ENCODE measurements at regions of chr1 and their contacts with region 1.

Region 1: DNA sequence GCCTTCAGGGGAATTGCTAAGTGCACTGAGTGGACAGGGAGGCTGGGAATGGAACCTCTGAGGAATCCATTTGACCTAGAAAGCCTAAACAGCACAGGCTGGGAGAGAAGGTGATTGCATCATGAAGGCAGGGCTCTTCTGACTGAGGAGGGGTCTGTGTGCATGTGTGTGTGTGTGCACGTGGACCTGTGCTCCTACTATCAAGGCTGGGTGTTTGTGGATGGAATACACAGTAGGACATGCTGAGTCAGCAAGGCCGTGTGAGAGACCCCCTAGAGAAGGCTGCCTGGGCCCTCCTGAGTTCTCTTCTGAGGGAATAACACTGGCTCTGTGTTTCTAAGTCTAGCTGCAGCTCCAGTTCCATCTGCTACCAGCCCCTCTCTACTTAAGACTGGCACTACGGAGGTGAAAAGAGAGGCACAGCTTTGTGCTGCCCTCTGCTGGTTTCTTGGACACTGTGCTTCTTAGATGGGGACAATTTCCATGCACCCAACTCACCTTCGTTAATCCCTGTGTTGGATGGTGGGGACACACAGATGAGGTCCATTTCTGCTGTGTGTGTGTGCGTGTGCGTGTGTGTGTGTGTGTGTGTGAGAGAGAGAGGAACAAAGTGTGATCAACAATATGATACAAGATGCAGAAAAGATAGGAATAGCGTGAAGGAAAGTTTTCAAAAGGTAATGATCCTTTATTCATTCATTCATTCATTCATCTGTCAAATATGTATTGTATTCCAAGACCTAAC is 6.2 kb upstream of the EFCAB14 start:
- DNase-seq: peak; percentile 34 to 65
- ATAC-seq: peak; percentile 90 to 98
- H3K4me3 ChIP-seq: no peak overlapping the region
- H3K27ac ChIP-seq: no peak overlapping the region
- H3K4me1 ChIP-seq: peaks cover 4 to 11% of the 10 kb centered on the region in 2 donors
- H3K27me3 ChIP-seq: no peaks in the 10 kb centered on the region
- CTCF ChIP-seq: peak; percentile 74 to 83 (median 76)
- POLR2A ChIP-seq: no peak

Region 2: GRCh38 chr1:46401964-46402626 is 323.1 kb before region 1 on chr1:
- in situ Hi-C with region 1: loop called in 1 of 4 experiments (anchors 25 kb)
- intact Hi-C with region 1: no loop called
- DNase-seq: peak; percentile 49 to 80
- ATAC-seq: peak; percentile 58 to 80
- H3K4me3 ChIP-seq: peak overlapping the region in 3 of 4 donors; percentile 17 to 34 (median 21)
- H3K27ac ChIP-seq: peak overlapping the region; percentile 47 to 80 (median 70)
- H3K4me1 ChIP-seq: peaks cover 34 to 49% of the 10 kb centered on the region in 2 donors
- H3K27me3 ChIP-seq: no peaks in the 10 kb centered on the region
- CTCF ChIP-seq: no peak
- POLR2A ChIP-seq: no peak

Region 3: DNA sequence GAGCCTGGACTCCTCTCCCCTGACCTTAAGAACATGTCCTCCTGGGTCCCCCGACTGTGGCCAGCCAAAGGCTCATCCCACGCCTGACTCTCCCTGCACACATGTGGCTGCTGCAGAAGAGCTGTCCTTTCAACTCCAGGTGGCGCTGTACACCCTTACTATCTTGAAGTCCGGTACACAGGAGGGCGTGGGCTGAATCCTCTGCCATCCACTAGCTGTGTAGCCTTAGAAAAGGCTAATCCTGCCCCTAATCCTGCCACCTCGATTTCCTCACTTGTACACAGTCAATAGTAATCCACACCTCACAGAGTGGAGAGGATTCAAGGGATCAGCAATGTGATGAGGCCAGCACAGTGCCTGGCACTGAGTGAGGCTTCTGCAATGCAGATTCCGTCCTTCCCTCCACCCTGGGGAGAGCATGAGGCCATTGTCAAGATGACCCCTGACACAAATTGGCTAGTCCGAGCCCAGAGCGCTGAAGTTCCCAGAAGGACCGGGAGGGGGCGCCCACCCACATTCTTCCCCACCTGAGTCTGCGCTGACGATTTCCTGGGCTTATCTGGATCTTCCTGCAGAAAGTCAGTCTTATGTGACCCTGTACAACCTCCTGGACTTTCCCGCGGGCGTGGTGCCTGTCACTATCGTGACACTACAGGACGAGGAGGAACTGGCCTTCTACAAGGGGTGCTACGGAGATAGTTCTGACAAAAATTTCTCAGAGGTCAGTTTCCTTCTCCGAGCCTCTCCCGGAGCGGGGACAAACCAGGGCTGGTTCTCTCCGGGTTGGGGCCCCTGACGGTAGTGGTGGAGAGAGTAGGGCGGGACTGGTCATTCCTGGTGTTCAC is 282.6 kb before region 1 on chr1:
- in situ Hi-C with region 1: loop called in 2 of 4 experiments (anchors 25 kb)
- intact Hi-C with region 1: no loop called
- DNase-seq: peak; percentile 31 to 48
- ATAC-seq: peak; percentile 63 to 77
- H3K4me3 ChIP-seq: peak overlapping the region; percentile 35 to 55 (median 40)
- H3K27ac ChIP-seq: no peak overlapping the region
- H3K4me1 ChIP-seq: peaks cover 0 to 6% of the 10 kb centered on the region in 2 donors
- H3K27me3 ChIP-seq: peaks cover 2 to 13% (median 5%) of the 10 kb centered on the region in 3 donors
- CTCF ChIP-seq: peak; percentile 61 to 88 (median 79)
- POLR2A ChIP-seq: no peak

Region 4: GRCh38 chr1:46616277-46617107 is 108.7 kb before region 1 on chr1 and contains the start of gene MOB3C:
- in situ Hi-C with region 1: loop called in 1 of 4 experiments (anchors 5 kb)
- intact Hi-C with region 1: no loop called
- DNase-seq: peak; percentile 81 to 90
- ATAC-seq: peak; percentile 60 to 65
- H3K4me3 ChIP-seq: peak within 1 kb of the TSS; percentile 77 to 89 (median 82)
- H3K27ac ChIP-seq: peak within 1 kb of the TSS; percentile 95 to 98 (median 96)
- H3K4me1 ChIP-seq: peaks cover 47 to 52% of the 10 kb centered on the region in 2 donors
- H3K27me3 ChIP-seq: no peaks in the 10 kb centered on the region
- CTCF ChIP-seq: no peak
- POLR2A ChIP-seq: peak; percentile 89 to 96
- total RNA-seq, gene MOB3C: 11.3 to 26.5 (median 23.3) TPM

Measured in gastrocnemius medialis (tissue), 4 donors.